Prostate gland (tissue), 2 donors: ENCODE measurements at regions of chr10 and their contacts with region 1.

Region 1: DNA sequence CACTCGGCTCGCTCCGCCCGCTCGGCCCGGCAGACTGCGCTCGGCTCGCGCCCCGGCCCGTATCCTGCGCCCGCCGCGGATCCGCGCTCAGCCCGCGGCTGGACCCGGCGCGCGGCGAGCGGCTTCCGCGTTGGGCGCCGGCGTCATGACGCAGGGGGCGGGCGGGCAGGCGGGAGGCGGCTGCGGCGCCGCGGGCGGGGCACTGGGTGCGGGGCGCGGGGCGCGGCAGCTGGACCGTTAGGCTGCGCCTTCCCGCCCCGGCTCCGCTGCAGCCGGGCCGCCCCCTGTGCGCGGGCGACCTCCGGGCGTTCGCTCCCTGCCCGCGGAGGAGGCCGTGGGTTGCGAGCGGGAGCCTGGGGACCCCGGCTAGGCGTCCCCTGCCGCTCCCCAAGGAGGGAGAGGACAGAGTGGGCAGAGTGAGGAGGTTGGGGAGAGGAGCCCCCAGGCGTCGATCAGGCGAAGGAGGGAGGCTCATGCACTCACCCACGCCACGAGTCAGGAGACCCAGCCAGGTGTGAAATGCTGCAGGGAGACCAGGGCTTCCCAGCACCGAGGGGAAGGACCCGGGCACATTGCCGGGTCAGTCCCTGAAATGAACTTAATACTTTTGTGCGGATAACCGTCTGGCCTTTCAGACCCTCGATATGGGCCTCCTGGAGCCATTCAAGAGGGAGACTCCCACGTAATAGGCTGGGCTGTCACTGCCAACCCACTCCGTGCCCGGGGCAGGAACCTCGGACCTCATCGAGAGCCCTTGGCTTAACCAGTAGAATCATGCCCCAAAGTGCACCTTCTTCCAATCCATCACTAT is at the start of gene PIP4K2A:
- DNase-seq: peak; percentile 55
- H3K4me3 ChIP-seq: peak within 1 kb of the TSS; percentile 78 to 88
- H3K27ac ChIP-seq: peak within 1 kb of the TSS; percentile 66 to 74
- H3K4me1 ChIP-seq: no peaks in the 10 kb centered on the region
- H3K27me3 ChIP-seq: no peaks in the 10 kb centered on the region
- CTCF ChIP-seq: no peak
- POLR2A ChIP-seq: no peak
- total RNA-seq, gene PIP4K2A: 13.2 to 17.4 TPM

Region 2: GRCh38 chr10:22010973-22011408 is 703.7 kb before region 1 on chr10:
- intact Hi-C with region 1: loop called (anchors 10 kb)
- DNase-seq: no peak
- H3K4me3 ChIP-seq: no peak overlapping the region
- H3K27ac ChIP-seq: no peak overlapping the region
- H3K4me1 ChIP-seq: no peaks in the 10 kb centered on the region
- H3K27me3 ChIP-seq: no peaks in the 10 kb centered on the region
- CTCF ChIP-seq: peak in 3 of 4 experiments; percentile 48 to 76 (median 51)
- POLR2A ChIP-seq: no peak

Region 3: GRCh38 chr10:22340362-22341189 is 374.1 kb before region 1 on chr10:
- intact Hi-C with region 1: loop called (anchors 10 kb)
- DNase-seq: peak; percentile 53
- H3K4me3 ChIP-seq: peak overlapping the region; percentile 76 to 84
- H3K27ac ChIP-seq: peak overlapping the region; percentile 92 to 96
- H3K4me1 ChIP-seq: peaks cover 9% of the 10 kb centered on the region
- H3K27me3 ChIP-seq: peaks cover 27% of the 10 kb centered on the region
- CTCF ChIP-seq: no peak
- POLR2A ChIP-seq: peak; percentile 13